MCF 10A (cell line): ENCODE measurements at regions of chr3 and their contacts with region 1.

Region 1: GRCh38 chr3:49093853-49094767 is at the start of gene QRICH1:
- DNase-seq: peak; percentile 99
- H3K4me3 Mint-ChIP-seq: peak within 1 kb of the TSS; percentile 89
- H3K27ac Mint-ChIP-seq: peak within 1 kb of the TSS; percentile 98
- H3K4me1 Mint-ChIP-seq: peaks cover 6% of the 10 kb centered on the region
- H3K27me3 Mint-ChIP-seq: no peaks in the 10 kb centered on the region
- CTCF ChIP-seq: peak; percentile 21
- total RNA-seq, gene QRICH1: 96.1 and 97.2 TPM in 2 replicates

Region 2: DNA sequence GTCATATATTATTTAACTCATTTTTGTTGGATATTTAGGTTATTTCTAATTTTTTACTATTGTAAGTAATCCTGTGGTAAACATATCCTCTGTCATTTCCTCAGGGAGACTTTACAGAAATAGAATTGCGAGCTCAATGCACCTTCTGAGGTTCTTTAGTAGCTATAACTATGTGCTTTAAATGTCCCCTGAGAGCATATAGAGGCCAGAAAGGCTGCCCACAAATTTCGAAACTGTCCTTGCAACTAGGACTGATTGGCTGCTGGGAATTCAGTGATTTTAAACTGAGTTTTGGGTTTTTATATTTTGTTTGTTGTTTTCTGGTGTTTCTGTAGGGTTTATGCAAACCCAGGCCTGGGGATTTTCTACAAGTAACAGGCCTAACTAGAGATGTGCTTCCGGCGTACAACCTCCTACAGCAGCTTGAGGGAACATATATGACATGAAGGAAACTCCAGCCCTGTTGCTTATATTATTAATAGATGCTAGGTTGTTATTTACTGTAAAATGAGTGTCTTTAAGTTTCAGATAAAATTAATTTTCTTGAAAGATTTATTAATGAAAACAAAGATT is 133.2 kb before region 1 on chr3:
- CTCF ChIA-PET with region 1: no interaction called
- POLR2A ChIA-PET with region 1: no interaction called
- intact Hi-C with region 1: no loop called
- DNase-seq: peak; percentile 9
- H3K4me3 Mint-ChIP-seq: no peak overlapping the region
- H3K27ac Mint-ChIP-seq: no peak overlapping the region
- H3K4me1 Mint-ChIP-seq: peaks cover 5% of the 10 kb centered on the region
- H3K27me3 Mint-ChIP-seq: no peaks in the 10 kb centered on the region
- CTCF ChIP-seq: no peak

Region 3: GRCh38 chr3:49007068-49007770 is 86.9 kb before region 1 on chr3 and contains the start of gene WDR6:
- CTCF ChIA-PET with region 1: interaction called, 3 read pairs
- POLR2A ChIA-PET with region 1: interaction called, 37 read pairs
- intact Hi-C with region 1: no loop called
- DNase-seq: peak; percentile 98
- H3K4me3 Mint-ChIP-seq: peak within 1 kb of the TSS; percentile 99
- H3K27ac Mint-ChIP-seq: peak within 1 kb of the TSS; percentile 99
- H3K4me1 Mint-ChIP-seq: peaks cover 10% of the 10 kb centered on the region
- H3K27me3 Mint-ChIP-seq: no peaks in the 10 kb centered on the region
- CTCF ChIP-seq: peak; percentile 33
- total RNA-seq, gene WDR6: 112 and 116 TPM in 2 replicates

Region 4: DNA sequence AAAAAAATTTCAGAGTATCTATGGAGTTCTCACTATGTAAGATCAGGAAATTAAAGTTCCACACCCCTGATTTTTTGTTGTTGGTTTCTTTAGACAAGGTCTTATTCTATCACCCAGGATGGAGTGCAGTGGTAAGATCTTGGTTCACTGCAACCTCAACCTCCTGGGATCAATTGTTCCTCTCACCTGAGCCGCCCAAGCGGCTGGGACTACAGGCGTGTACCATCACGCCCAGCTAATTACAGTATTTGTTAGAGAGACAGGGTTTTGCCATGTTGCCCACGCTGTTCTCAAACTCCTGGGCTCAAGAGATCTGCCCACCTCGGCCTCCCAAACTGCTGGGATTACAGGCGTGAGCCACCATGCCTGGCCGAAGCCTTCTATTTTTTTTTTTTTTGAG is 12.7 kb before region 1 on chr3:
- CTCF ChIA-PET with region 1: interaction called, 3 read pairs
- POLR2A ChIA-PET with region 1: interaction called, 34 read pairs
- intact Hi-C with region 1: no loop called
- DNase-seq: peak; percentile 21
- H3K4me3 Mint-ChIP-seq: no peak overlapping the region
- H3K27ac Mint-ChIP-seq: no peak overlapping the region
- H3K4me1 Mint-ChIP-seq: no peaks in the 10 kb centered on the region
- H3K27me3 Mint-ChIP-seq: no peaks in the 10 kb centered on the region
- CTCF ChIP-seq: no peak

Region 5: DNA sequence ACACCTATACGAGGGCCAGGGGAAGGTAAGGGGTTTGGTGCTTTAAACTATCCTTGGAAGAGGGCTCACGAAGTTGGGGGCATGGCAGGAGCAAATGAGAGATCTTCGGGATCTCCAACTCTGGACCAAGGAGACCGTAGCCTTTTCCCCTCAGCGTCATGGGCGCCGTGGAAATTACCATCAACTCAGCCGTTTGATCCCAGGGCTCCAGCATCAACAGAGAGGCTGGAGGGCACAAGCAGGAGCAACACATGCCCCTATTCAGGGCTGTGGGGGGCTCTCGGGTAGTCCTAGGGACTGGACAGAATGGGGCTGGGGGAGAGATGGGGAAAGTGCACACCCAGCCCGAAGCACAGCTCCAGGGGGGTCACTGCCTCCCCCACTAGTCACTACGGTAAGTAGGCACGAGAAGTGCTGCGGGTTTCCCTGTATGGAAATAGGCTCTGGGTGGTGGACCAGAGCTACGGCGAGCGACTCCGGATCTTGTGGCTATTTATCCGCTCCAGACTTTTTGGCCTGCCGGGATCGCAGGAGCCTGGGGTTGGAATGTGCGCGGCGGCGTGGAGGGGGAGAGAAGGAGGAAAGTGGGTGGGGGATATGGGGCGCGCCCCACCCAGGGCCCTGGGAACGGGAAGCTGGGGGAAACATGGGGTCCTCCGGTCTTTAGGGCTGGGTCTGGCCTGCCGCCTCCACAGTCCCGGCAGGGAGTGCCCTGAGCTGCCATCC is 39.3 kb after region 1 on chr3:
- CTCF ChIA-PET with region 1: interaction called, 6 read pairs
- POLR2A ChIA-PET with region 1: interaction called, 50 read pairs
- intact Hi-C with region 1: no loop called
- DNase-seq: peak; percentile 87
- H3K4me3 Mint-ChIP-seq: peak overlapping the region; percentile 90
- H3K27ac Mint-ChIP-seq: peak overlapping the region; percentile 84
- H3K4me1 Mint-ChIP-seq: peaks cover 16% of the 10 kb centered on the region
- H3K27me3 Mint-ChIP-seq: no peaks in the 10 kb centered on the region
- CTCF ChIP-seq: no peak

Region 6: GRCh38 chr3:49351521-49352011 is 257.5 kb after region 1 on chr3:
- CTCF ChIA-PET with region 1: no interaction called
- POLR2A ChIA-PET with region 1: interaction called, 23 read pairs
- intact Hi-C with region 1: no loop called
- DNase-seq: peak; percentile 76
- H3K4me3 Mint-ChIP-seq: peak overlapping the region; percentile 45
- H3K27ac Mint-ChIP-seq: peak overlapping the region; percentile 82
- H3K4me1 Mint-ChIP-seq: peaks cover 40% of the 10 kb centered on the region
- H3K27me3 Mint-ChIP-seq: no peaks in the 10 kb centered on the region
- CTCF ChIP-seq: no peak